ENCODE measurements at regions of chr1 and their contacts with region 1.

Region 1: DNA sequence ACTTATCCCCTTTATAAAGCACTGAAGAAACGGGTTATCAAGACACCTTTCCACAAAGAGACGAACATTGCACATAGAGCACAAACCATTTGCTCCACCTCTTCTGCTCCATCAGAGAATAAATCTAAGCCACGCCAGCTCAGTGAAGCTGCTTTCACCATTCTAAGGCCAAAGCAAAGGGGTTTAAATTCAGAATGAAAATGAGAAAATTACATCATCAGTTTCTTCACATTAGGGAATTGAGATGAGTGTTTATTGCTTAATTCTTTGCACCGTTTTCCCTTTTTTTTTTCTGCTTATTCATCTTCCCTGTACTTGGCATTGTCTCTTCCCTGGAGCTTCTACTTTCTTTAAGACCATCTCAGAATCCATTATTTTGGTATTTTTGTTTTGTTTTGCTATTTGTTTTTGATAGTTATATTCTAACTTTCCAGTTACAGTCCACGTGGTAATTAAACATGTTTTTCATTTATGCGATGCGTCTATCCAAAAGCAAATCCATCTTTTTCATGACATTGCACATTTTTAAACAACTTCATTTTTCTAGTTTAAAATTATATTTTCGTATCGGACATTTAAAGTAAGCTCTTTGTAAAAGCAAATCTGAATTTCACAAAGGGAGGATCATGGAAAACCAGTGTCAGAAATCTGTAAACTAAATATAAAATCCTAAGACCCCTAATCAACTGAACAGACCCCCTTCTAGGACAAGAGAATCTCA is 1.9 kb upstream of the OR2T34 start:
- DNase-seq: no peak
- H3K4me3 Mint-ChIP-seq: no peak overlapping the region
- H3K27ac Mint-ChIP-seq: no peak overlapping the region
- H3K4me1 Mint-ChIP-seq: peaks cover 7% of the 10 kb centered on the region
- H3K27me3 Mint-ChIP-seq: no peaks in the 10 kb centered on the region

Region 2: GRCh38 chr1:248471154-248471553 is 105.3 kb before region 1 on chr1:
- intact Hi-C with region 1: loop called (anchors 5 kb)
- DNase-seq: no peak
- H3K4me3 Mint-ChIP-seq: no peak overlapping the region
- H3K27ac Mint-ChIP-seq: no peak overlapping the region
- H3K4me1 Mint-ChIP-seq: no peaks in the 10 kb centered on the region
- H3K27me3 Mint-ChIP-seq: peaks cover 9% of the 10 kb centered on the region